CD4-positive, alpha-beta memory T cell (primary cell): ENCODE measurements at regions of chr7 and their contacts with region 1.

Region 1: GRCh38 chr7:30564243-30564892 is 30.3 kb upstream of the GARS1 start:
- DNase-seq: peak; percentile 64 to 73 (median 67)
- H3K4me3 ChIP-seq: no peak overlapping the region
- H3K4me3 Mint-ChIP-seq: no peak overlapping the region
- H3K27ac ChIP-seq: no peak overlapping the region
- H3K27ac Mint-ChIP-seq: peak overlapping the region in 3 of 7 donors; percentile 30 to 84 (median 50)
- H3K4me1 ChIP-seq: no peaks in the 10 kb centered on the region
- H3K4me1 Mint-ChIP-seq: no peaks in the 10 kb centered on the region
- H3K27me3 ChIP-seq: no peaks in the 10 kb centered on the region
- H3K27me3 Mint-ChIP-seq: no peaks in the 10 kb centered on the region

Region 2: DNA sequence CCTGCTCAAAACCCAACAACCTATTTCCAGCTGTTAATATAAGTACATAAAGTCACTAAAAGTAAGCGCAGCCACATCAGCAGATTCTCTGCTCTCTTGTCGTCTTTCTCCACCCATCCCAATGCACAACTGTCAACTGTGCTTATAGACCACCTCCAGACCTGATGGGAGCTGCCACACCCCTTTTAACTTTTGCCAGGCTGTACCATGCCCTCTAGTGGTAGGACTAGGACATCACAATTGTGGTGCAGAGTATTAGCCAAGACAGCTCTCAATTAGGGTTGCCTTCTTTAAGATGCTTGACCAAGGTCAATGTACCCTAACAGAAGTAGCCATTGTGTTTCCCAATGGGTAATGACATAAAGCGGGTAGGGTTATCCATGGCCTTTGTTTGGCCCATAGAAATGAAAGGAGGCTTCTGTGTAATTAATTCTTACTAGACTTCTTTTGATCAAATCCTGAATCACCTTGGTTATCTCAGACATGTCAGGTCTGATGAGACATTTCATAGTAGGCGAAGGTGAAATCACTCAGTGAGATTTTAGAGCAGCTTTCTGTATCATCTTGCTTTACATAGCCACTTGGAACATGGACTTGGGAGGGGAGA is 642.9 kb before region 1 on chr7:
- CTCF ChIA-PET with region 1: no interaction called
- POLR2A ChIA-PET with region 1: no interaction called
- intact Hi-C with region 1: loop called (anchors 1 kb)
- DNase-seq: peak; percentile 24 to 59 (median 41)
- H3K4me3 ChIP-seq: no peak overlapping the region
- H3K4me3 Mint-ChIP-seq: no peak overlapping the region
- H3K27ac ChIP-seq: no peak overlapping the region
- H3K27ac Mint-ChIP-seq: no peak overlapping the region
- H3K4me1 ChIP-seq: no peaks in the 10 kb centered on the region
- H3K4me1 Mint-ChIP-seq: no peaks in the 10 kb centered on the region
- H3K27me3 ChIP-seq: no peaks in the 10 kb centered on the region
- H3K27me3 Mint-ChIP-seq: peaks cover 7% of the 10 kb centered on the region in 2 donors

Region 3: DNA sequence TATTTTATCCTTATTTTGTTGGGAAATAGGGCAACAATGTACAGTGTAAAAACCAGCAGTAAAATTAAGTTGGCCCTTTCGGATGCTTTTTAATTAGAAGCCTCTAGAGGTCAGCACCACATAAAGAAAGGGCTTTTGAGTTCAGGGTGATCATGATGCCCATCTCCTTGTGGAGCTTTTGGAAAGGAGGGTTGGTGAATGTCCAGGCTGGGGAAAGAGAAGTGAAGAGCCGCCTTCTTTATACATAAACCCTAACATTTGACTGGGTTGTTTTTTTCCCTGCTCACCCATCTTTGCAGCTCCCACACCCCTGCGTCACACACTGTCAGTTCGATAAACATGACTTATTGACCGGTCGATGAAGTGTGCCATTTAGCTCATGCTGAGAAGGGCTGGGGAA is 399.8 kb before region 1 on chr7:
- CTCF ChIA-PET with region 1: interaction called, 5 read pairs
- POLR2A ChIA-PET with region 1: no interaction called
- intact Hi-C with region 1: loop called (anchors 10 kb)
- DNase-seq: peak in 1 of 5 donors; percentile 20
- H3K4me3 ChIP-seq: no peak overlapping the region
- H3K4me3 Mint-ChIP-seq: no peak overlapping the region
- H3K27ac ChIP-seq: no peak overlapping the region
- H3K27ac Mint-ChIP-seq: no peak overlapping the region
- H3K4me1 ChIP-seq: peaks cover 15% of the 10 kb centered on the region
- H3K4me1 Mint-ChIP-seq: peaks cover 12 to 30% (median 20%) of the 10 kb centered on the region in 4 donors
- H3K27me3 ChIP-seq: no peaks in the 10 kb centered on the region
- H3K27me3 Mint-ChIP-seq: no peaks in the 10 kb centered on the region

Region 4: DNA sequence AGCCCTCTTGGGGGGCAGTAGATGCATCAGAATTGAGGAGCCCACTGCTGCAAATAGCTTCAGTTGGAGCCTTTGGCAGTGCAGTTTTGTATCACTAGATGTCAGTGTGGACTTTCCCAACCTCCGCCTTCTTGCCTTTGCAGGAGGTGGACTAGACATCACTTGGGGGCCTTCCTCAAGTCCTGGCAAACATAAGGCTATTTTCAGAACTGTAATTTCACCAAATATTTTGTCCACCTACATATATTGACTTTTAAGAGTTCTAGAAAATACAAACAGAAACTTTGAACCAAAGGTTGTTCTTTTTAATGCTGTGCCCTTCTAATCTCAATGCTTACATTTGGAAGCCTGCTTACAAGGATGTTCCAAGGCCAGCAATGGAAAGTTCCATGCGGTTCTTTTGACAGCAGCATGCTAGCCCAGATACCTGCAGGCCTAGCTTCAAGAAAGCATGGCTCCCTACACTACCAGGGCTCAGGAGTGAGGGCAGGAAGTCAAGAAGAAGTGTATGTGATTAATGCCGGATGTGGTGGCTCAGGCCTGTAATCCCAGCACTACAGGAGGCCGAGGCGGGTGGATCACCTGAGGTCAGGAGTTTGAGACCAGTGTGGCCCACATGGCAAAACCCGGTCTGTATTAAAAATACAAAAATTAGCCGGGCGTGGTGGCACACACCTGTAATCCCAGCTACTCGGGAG is 288.0 kb before region 1 on chr7:
- CTCF ChIA-PET with region 1: interaction called, 44 read pairs
- POLR2A ChIA-PET with region 1: no interaction called
- intact Hi-C with region 1: loop called (anchors 1 kb)
- DNase-seq: peak; percentile 41 to 53 (median 44)
- H3K4me3 ChIP-seq: no peak overlapping the region
- H3K4me3 Mint-ChIP-seq: peak overlapping the region in 1 of 8 donors; percentile 20
- H3K27ac ChIP-seq: no peak overlapping the region
- H3K27ac Mint-ChIP-seq: no peak overlapping the region
- H3K4me1 ChIP-seq: no peaks in the 10 kb centered on the region
- H3K4me1 Mint-ChIP-seq: peaks cover 3 to 8% (median 4%) of the 10 kb centered on the region in 4 donors
- H3K27me3 ChIP-seq: no peaks in the 10 kb centered on the region
- H3K27me3 Mint-ChIP-seq: peaks cover 0 to 1% of the 10 kb centered on the region in 2 donors

Region 5: DNA sequence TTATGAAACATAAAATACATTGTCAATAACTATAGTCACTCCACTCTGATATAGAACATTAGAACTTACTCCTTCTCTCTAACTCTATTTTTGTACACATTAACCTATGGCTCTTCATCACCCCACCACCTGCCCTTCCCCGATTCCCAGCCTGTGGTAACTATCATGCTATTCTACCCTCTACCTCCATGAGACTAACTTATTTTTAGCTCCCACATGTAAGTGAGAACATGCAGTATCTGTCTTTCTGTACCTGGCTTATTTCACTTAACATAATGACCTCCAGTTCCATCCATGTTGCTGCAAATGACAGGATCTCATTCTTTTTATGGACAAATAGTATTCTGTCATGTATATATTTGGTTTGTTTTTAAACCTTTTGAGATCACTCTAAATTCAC is 77.0 kb before region 1 on chr7:
- CTCF ChIA-PET with region 1: no interaction called
- POLR2A ChIA-PET with region 1: no interaction called
- intact Hi-C with region 1: no loop called
- DNase-seq: no peak
- H3K4me3 ChIP-seq: no peak overlapping the region
- H3K4me3 Mint-ChIP-seq: no peak overlapping the region
- H3K27ac ChIP-seq: no peak overlapping the region
- H3K27ac Mint-ChIP-seq: no peak overlapping the region
- H3K4me1 ChIP-seq: no peaks in the 10 kb centered on the region
- H3K4me1 Mint-ChIP-seq: peaks cover 0 to 4% (median 0%) of the 10 kb centered on the region in 4 donors
- H3K27me3 ChIP-seq: no peaks in the 10 kb centered on the region
- H3K27me3 Mint-ChIP-seq: peaks cover 1 to 3% of the 10 kb centered on the region in 2 donors

Region 6: DNA sequence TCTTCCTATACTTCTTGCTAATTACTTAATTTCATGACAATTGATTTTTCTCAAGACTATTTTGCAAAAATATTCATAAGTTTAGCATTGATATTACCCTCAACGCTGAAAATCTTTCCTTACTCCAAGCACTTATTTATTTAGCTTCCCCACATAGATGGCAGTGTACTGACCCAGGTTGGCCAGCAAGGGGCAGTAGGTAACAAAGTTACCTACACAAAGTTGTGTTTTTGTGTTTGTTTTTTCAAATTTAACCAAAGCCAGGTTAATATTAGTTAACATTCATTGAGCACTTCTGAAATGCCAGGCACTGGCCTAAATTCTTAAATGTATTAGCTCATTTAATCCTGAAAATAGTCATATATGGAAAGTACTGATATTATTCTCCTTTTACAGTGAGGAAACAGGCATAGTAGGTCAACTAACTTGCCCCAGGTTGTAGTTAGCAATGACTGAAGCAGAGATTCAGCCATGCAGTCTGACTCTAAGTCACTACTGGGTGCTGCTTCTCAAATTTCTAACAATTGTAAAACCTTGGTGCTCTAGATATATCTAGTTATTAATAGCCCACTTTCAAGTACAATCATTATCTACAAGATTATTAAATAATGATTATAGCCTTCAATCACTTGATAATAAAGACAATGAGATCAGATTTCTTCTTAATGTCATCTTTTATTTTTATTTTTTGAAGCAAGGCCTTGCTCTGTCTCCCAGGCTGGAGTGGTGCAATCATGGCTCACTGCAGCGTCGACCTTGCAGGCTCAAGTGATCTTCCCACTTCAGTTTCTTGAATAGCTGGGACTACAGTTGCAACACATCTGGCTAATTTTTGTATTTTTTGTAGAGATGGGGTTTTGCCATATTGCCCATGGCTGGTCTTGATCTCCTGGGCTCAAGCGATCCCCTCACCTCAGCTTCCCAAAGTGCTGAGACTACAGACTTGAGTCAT is 54.0 kb before region 1 on chr7:
- CTCF ChIA-PET with region 1: interaction called, 27 read pairs
- POLR2A ChIA-PET with region 1: no interaction called
- intact Hi-C with region 1: loop called (anchors 1 kb)
- DNase-seq: peak; percentile 23 to 37 (median 29)
- H3K4me3 ChIP-seq: no peak overlapping the region
- H3K4me3 Mint-ChIP-seq: no peak overlapping the region
- H3K27ac ChIP-seq: no peak overlapping the region
- H3K27ac Mint-ChIP-seq: no peak overlapping the region
- H3K4me1 ChIP-seq: peaks cover 4% of the 10 kb centered on the region
- H3K4me1 Mint-ChIP-seq: peaks cover 0 to 5% (median 2%) of the 10 kb centered on the region in 4 donors
- H3K27me3 ChIP-seq: no peaks in the 10 kb centered on the region
- H3K27me3 Mint-ChIP-seq: no peaks in the 10 kb centered on the region

Region 7: GRCh38 chr7:30548762-30549344 is 15.5 kb before region 1 on chr7:
- CTCF ChIA-PET with region 1: interaction called, 99 read pairs
- POLR2A ChIA-PET with region 1: no interaction called
- intact Hi-C with region 1: no loop called
- DNase-seq: peak in 3 of 5 donors; percentile 20 to 24 (median 21)
- H3K4me3 ChIP-seq: no peak overlapping the region
- H3K4me3 Mint-ChIP-seq: no peak overlapping the region
- H3K27ac ChIP-seq: no peak overlapping the region
- H3K27ac Mint-ChIP-seq: peak overlapping the region in 2 of 7 donors; percentile 16 to 61
- H3K4me1 ChIP-seq: no peaks in the 10 kb centered on the region
- H3K4me1 Mint-ChIP-seq: peaks cover 0 to 2% (median under 1%) of the 10 kb centered on the region in 4 donors
- H3K27me3 ChIP-seq: no peaks in the 10 kb centered on the region
- H3K27me3 Mint-ChIP-seq: no peaks in the 10 kb centered on the region

Region 8: DNA sequence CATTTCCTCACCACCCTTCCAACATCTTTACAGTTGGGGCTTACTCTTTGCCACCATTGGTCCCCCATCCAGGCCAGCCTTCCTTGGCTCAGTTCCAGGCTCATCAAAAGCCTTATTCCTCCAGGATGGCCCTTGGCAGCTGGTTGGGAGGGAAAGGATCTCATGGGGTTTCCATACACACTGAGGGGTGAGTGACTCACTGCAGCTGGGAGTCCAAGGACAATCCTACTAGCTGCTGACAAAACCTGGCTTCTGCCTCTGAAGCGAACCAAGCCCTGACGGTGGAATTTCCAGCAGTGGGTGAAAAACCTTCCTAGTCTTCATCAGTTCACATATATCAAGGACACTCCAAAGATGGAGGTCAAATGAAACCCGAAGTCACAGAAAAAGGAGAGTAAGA is 94.9 kb after region 1 on chr7:
- CTCF ChIA-PET with region 1: no interaction called
- POLR2A ChIA-PET with region 1: no interaction called
- intact Hi-C with region 1: no loop called
- DNase-seq: no peak
- H3K4me3 ChIP-seq: no peak overlapping the region
- H3K4me3 Mint-ChIP-seq: no peak overlapping the region
- H3K27ac ChIP-seq: no peak overlapping the region
- H3K27ac Mint-ChIP-seq: no peak overlapping the region
- H3K4me1 ChIP-seq: no peaks in the 10 kb centered on the region
- H3K4me1 Mint-ChIP-seq: no peaks in the 10 kb centered on the region
- H3K27me3 ChIP-seq: no peaks in the 10 kb centered on the region
- H3K27me3 Mint-ChIP-seq: peaks cover 0 to 3% of the 10 kb centered on the region in 2 donors

Region 9: DNA sequence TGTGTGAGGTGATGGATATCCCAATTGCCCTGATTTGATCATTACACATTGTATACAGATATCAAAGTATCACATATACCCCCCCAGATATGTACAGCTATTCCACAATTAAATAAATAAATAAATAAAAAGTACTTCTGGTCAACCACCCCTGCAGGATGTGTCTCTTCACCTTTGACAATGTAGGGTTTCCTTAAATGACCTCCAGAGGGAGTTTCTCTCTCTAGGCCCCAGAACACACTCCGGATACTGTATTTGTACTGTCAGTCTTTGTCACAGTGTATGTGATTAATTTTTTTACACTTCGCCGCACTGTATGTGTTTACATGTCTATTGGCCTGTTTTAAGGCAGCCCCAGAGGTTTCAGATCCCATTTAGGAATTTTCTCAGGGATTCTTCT is 611.3 kb after region 1 on chr7:
- CTCF ChIA-PET with region 1: no interaction called
- POLR2A ChIA-PET with region 1: no interaction called
- intact Hi-C with region 1: no loop called
- DNase-seq: no peak
- H3K4me3 ChIP-seq: no peak overlapping the region
- H3K4me3 Mint-ChIP-seq: no peak overlapping the region
- H3K27ac ChIP-seq: no peak overlapping the region
- H3K27ac Mint-ChIP-seq: no peak overlapping the region
- H3K4me1 ChIP-seq: no peaks in the 10 kb centered on the region
- H3K4me1 Mint-ChIP-seq: no peaks in the 10 kb centered on the region
- H3K27me3 ChIP-seq: no peaks in the 10 kb centered on the region
- H3K27me3 Mint-ChIP-seq: peaks cover 7 to 9% of the 10 kb centered on the region in 2 donors